Caco-2 (cell line): ENCODE measurements at regions of chr2 and their contacts with region 1.

Region 1: GRCh38 chr2:30146438-30147147 is at the start of gene YPEL5:
- DNase-seq: peak; percentile 99
- H3K4me3 ChIP-seq: peak within 1 kb of the TSS; percentile 69
- H3K4me3 Mint-ChIP-seq: peak within 1 kb of the TSS; percentile 80
- H3K27ac Mint-ChIP-seq: peak within 1 kb of the TSS; percentile 89
- H3K4me1 ChIP-seq: peaks cover 38% of the 10 kb centered on the region
- H3K4me1 Mint-ChIP-seq: peaks cover 29% of the 10 kb centered on the region
- H3K27me3 ChIP-seq: no peaks in the 10 kb centered on the region
- H3K27me3 Mint-ChIP-seq: peaks cover 4% of the 10 kb centered on the region
- CTCF ChIP-seq: no peak
- total RNA-seq, gene YPEL5: 43.6 and 50.9 TPM in 2 replicates

Region 2: DNA sequence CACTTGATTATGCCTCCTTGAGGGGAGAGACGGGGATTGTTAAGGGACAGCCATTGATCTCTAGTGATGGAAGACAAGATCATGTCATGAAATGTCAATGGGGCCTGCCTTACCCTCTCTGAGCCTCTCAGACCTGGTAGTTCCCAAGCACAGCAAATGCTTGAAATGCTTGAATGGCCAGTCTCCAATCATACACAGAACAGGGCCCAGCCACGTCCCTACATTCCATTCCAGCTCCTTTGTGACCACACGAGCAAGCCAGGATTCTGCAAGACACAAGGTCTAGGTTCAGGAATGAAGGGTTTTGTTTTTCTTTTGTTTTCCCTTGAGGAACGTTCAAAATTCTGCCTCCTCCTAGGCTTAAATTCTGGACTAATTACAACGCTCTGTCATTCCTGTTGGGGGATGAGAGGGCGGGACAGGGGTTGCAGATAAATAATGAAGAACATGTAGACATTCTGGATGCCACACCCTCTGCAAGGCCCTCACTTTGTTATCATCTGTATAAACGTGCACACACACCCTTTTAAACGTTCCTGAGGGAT is 97.9 kb before region 1 on chr2:
- CTCF ChIA-PET with region 1: no interaction called
- POLR2A ChIA-PET with region 1: no interaction called
- intact Hi-C with region 1: no loop called
- DNase-seq: peak in 1 of 2 experiments; percentile 43
- H3K4me3 ChIP-seq: no peak overlapping the region
- H3K4me3 Mint-ChIP-seq: no peak overlapping the region
- H3K27ac Mint-ChIP-seq: no peak overlapping the region
- H3K4me1 ChIP-seq: no peaks in the 10 kb centered on the region
- H3K4me1 Mint-ChIP-seq: no peaks in the 10 kb centered on the region
- H3K27me3 ChIP-seq: peaks cover 2% of the 10 kb centered on the region
- H3K27me3 Mint-ChIP-seq: peaks cover 44% of the 10 kb centered on the region
- CTCF ChIP-seq: no peak

Region 3: DNA sequence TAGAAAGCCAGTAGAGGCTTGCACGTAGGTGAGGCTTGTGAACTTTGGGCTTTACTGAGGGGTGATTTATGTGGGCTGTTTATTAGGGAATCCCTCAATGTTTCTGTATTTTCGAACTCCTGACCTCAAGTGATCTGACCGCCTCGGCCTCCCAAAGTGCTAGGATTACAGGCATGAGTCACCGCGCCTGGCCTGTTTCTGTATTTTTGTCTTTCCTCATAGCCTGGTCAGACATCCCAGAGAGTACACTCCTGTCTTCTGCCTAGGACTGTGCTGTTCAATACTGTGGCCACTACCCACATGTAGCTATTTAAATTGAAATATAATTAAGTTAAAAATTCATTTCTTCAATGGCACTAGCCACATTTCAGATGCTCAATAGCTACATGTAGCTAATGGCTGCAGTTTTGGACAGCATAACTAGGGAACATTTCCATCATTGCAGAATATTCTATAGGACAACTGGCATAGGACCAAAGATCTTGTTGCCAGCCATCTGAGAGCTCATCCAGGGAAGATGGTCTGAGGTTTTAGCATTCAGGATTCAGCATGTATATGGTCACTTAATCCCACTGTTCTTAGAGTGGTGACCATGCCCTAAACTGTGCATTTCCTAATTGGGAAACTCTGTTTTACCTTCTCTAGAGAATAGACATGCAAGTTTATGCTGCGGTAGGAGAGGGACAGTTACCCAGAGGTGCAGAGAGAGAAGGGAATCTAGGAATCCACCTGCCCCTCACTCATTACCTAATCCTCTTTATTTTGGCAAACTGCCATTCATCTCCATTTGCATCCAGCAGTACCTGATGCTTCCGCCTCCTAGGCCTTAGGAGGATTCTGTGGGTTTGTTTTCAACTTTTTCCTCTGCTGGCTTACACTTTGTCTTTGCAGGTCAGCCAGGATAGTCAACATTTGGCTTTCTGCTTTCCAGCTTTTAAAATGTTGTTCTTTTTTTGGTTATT is 364.8 kb after region 1 on chr2:
- CTCF ChIA-PET with region 1: no interaction called
- POLR2A ChIA-PET with region 1: no interaction called
- intact Hi-C with region 1: loop called (anchors 5 kb)
- DNase-seq: peak; percentile 31 to 55
- H3K4me3 ChIP-seq: no peak overlapping the region
- H3K4me3 Mint-ChIP-seq: no peak overlapping the region
- H3K27ac Mint-ChIP-seq: peak overlapping the region; percentile 38
- H3K4me1 ChIP-seq: peaks cover 30% of the 10 kb centered on the region
- H3K4me1 Mint-ChIP-seq: peaks cover 44% of the 10 kb centered on the region
- H3K27me3 ChIP-seq: no peaks in the 10 kb centered on the region
- H3K27me3 Mint-ChIP-seq: no peaks in the 10 kb centered on the region
- CTCF ChIP-seq: no peak